ENCODE measurements at regions of chr15 and their contacts with region 1.

Region 1: GRCh38 chr15:34587717-34588674 is 4.5 kb upstream of the GOLGA8B start:
- DNase-seq: peak; percentile 67 to 72 (median 68)
- H3K4me3 ChIP-seq: no peak overlapping the region
- H3K4me3 Mint-ChIP-seq: peak overlapping the region; percentile 42 to 82 (median 71)
- H3K27ac ChIP-seq: no peak overlapping the region
- H3K27ac Mint-ChIP-seq: peak overlapping the region in 4 of 7 donors; percentile 1 to 82 (median 64)
- H3K4me1 ChIP-seq: peaks cover 11% of the 10 kb centered on the region
- H3K4me1 Mint-ChIP-seq: peaks cover 4 to 6% (median 5%) of the 10 kb centered on the region in 4 donors
- H3K27me3 ChIP-seq: no peaks in the 10 kb centered on the region
- H3K27me3 Mint-ChIP-seq: peaks cover 0 to 5% of the 10 kb centered on the region in 2 donors

Region 2: GRCh38 chr15:34038023-34038870 is 549.7 kb before region 1 on chr15:
- CTCF ChIA-PET with region 1: interaction called, 3 read pairs
- POLR2A ChIA-PET with region 1: no interaction called
- intact Hi-C with region 1: loop called (anchors 1 kb)
- DNase-seq: peak; percentile 65 to 74 (median 70)
- H3K4me3 ChIP-seq: peak overlapping the region; percentile 92 to 96
- H3K4me3 Mint-ChIP-seq: peak overlapping the region; percentile 85 to 97 (median 94)
- H3K27ac ChIP-seq: peak overlapping the region; percentile 73
- H3K27ac Mint-ChIP-seq: peak overlapping the region; percentile 83 to 96 (median 93)
- H3K4me1 ChIP-seq: peaks cover 13% of the 10 kb centered on the region
- H3K4me1 Mint-ChIP-seq: peaks cover 9 to 23% (median 15%) of the 10 kb centered on the region in 4 donors
- H3K27me3 ChIP-seq: no peaks in the 10 kb centered on the region
- H3K27me3 Mint-ChIP-seq: no peaks in the 10 kb centered on the region

Region 3: GRCh38 chr15:34101366-34102175 is 486.4 kb before region 1 on chr15 and contains the starts of genes EMC7 and PGBD4:
- CTCF ChIA-PET with region 1: interaction called, 3 read pairs
- POLR2A ChIA-PET with region 1: interaction called, 8 read pairs
- intact Hi-C with region 1: loop called (anchors 5 kb)
- DNase-seq: peak; percentile 99 to 100 (median 99)
- H3K4me3 ChIP-seq: peak within 1 kb of the TSS; percentile 94 to 97
- H3K4me3 Mint-ChIP-seq: peak within 1 kb of the TSS; percentile 92 to 100 (median 100)
- H3K27ac ChIP-seq: peak within 1 kb of the TSS; percentile 85
- H3K27ac Mint-ChIP-seq: peak within 1 kb of the TSS; percentile 94 to 100 (median 99)
- H3K4me1 ChIP-seq: peaks cover 37% of the 10 kb centered on the region
- H3K4me1 Mint-ChIP-seq: peaks cover 16 to 52% (median 36%) of the 10 kb centered on the region in 4 donors
- H3K27me3 ChIP-seq: no peaks in the 10 kb centered on the region
- H3K27me3 Mint-ChIP-seq: peaks cover 0 to 1% of the 10 kb centered on the region in 2 donors
- total RNA-seq, gene EMC7: 38.3 to 47.8 TPM
- total RNA-seq, gene PGBD4: 4.7 to 4.9 TPM

Region 4: DNA sequence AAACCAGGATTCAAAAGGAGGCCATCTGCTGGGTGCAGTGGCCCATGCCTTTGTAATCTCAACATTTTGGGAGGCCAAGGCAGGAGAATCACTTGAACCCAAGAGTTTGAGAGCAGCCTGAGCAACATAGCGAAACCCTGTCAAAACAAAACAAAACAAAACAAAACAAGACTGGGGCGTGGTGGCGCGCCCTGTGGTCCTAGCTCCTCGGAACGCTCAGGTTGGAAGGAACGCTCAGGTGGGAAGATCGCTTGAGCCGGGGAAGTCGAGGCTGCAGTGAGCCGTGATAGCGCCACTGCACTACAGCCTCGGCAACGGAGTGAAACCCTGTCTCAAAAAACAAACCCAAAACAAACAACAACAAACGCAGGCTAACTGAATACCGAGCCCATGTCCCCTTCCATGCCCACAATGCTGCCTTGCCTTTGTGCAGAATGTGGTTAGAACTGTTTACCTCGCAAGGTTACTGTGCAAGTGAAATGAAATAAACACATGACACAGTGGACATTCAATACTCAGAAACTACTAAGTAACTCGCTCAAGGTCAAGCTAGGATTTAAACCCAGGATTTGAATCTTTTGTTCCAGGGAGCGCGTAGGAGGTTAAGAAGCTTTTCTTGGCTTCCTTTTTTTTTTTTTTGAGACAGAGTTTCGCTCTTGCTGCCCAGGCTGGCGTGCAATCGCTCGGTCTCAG is 363.9 kb before region 1 on chr15:
- CTCF ChIA-PET with region 1: interaction called, 3 read pairs
- POLR2A ChIA-PET with region 1: interaction called, 9 read pairs
- intact Hi-C with region 1: loop called (anchors 1 kb)
- DNase-seq: no peak
- H3K4me3 ChIP-seq: peak overlapping the region; percentile 88 to 93
- H3K4me3 Mint-ChIP-seq: peak overlapping the region; percentile 90 to 99 (median 96)
- H3K27ac ChIP-seq: peak overlapping the region; percentile 89
- H3K27ac Mint-ChIP-seq: peak overlapping the region; percentile 92 to 100 (median 99)
- H3K4me1 ChIP-seq: peaks cover 25% of the 10 kb centered on the region
- H3K4me1 Mint-ChIP-seq: peaks cover 21 to 32% (median 25%) of the 10 kb centered on the region in 4 donors
- H3K27me3 ChIP-seq: no peaks in the 10 kb centered on the region
- H3K27me3 Mint-ChIP-seq: peaks cover 3% of the 10 kb centered on the region in 2 donors

Region 5: GRCh38 chr15:34342737-34343575 is 245.0 kb before region 1 on chr15 and contains the starts of genes NOP10 and NUTM1:
- CTCF ChIA-PET with region 1: interaction called, 17 read pairs
- POLR2A ChIA-PET with region 1: interaction called, 24 read pairs
- intact Hi-C with region 1: loop called (anchors 1 kb)
- DNase-seq: peak; percentile 91 to 93 (median 92)
- H3K4me3 ChIP-seq: peak within 1 kb of the TSS; percentile 54 to 96
- H3K4me3 Mint-ChIP-seq: peak within 1 kb of the TSS in 2 of 8 donors; percentile 87
- H3K27ac ChIP-seq: peak within 1 kb of the TSS; percentile 73
- H3K27ac Mint-ChIP-seq: peak within 1 kb of the TSS in 5 of 7 donors; percentile 77 to 93 (median 88)
- H3K4me1 ChIP-seq: peaks cover 28% of the 10 kb centered on the region
- H3K4me1 Mint-ChIP-seq: peaks cover 14 to 31% (median 17%) of the 10 kb centered on the region in 4 donors
- H3K27me3 ChIP-seq: no peaks in the 10 kb centered on the region
- H3K27me3 Mint-ChIP-seq: no peaks in the 10 kb centered on the region
- total RNA-seq, gene NOP10: 73.5 to 77.2 TPM
- total RNA-seq, gene NUTM1: not detected

Region 6: DNA sequence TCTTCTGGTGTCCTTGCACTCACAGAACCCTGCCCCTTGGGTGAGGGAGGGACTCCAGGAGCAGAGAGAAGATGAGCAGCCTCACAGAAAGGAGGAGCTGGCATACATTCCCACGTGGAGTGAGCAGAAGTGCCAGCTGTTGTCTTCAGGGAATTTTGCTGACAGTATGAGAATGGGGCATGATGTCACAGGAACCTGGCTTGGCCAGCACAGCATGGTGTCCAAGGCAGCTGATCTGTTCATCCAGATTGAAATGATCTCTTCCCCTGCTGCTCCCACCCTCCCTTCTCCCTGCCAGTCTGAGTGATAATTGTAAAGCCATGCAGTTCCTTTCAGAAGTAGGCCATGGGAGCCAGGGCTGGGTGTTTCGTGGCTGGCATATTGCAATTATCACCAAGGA is 113.5 kb after region 1 on chr15:
- CTCF ChIA-PET with region 1: no interaction called
- POLR2A ChIA-PET with region 1: no interaction called
- intact Hi-C with region 1: no loop called
- DNase-seq: no peak
- H3K4me3 ChIP-seq: no peak overlapping the region
- H3K4me3 Mint-ChIP-seq: no peak overlapping the region
- H3K27ac ChIP-seq: no peak overlapping the region
- H3K27ac Mint-ChIP-seq: no peak overlapping the region
- H3K4me1 ChIP-seq: no peaks in the 10 kb centered on the region
- H3K4me1 Mint-ChIP-seq: no peaks in the 10 kb centered on the region
- H3K27me3 ChIP-seq: no peaks in the 10 kb centered on the region
- H3K27me3 Mint-ChIP-seq: peaks cover 9 to 14% of the 10 kb centered on the region in 2 donors

Measured in CD4-positive, alpha-beta memory T cell (primary cell).